ENCODE measurements at regions of chr1 and their contacts with region 1.

Region 1: DNA sequence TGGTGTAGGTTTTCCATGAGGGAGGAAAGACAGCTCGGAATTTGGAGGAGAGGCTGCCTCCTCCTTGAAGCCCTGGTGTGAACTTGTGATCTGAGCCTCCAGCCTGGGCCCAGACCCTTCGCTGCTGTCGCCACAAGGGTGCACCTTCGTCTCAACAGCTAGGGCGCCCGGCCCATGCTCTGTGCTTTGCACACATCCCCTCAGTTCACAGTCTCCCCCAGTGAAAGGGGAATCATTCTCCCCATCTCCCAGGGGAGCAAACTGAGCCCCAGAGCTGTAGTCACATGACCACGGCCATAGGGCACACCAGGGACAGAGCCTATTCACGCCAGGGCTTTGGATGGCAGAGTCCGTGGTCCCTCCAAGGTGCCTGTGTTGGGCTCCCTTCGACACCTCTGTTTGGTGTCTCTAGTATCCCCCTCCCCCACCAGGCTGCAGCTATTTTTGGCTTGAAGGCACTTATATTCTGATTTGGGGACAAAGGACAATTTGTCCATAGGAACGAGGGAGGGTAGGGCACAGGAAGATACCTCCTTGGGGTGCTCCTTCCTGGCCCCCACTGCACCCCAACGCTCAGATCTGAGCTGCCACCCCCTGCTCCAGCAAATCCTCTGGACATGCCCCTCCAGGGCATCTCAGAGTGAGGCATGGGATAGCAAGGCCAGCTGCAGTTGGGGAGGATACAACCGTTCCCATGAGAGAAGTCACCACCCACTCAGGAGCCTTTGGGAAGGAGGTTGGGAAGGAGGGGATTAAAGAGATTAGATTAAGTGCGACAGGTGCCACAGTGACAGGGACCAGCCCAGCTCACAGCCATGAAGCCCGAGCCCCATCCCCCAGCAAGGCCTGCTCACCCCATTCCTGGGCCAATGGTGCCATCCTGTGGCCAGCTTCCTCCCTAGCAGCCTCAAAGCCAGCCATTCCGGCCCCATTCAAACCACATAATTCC is 15.7 kb downstream of the MATN1 start:
- DNase-seq: peak; percentile 65
- H3K4me3 ChIP-seq: no peak overlapping the region
- H3K27ac ChIP-seq: no peak overlapping the region
- H3K4me1 ChIP-seq: no peaks in the 10 kb centered on the region
- CTCF ChIP-seq: peak; percentile 93

Region 2: DNA sequence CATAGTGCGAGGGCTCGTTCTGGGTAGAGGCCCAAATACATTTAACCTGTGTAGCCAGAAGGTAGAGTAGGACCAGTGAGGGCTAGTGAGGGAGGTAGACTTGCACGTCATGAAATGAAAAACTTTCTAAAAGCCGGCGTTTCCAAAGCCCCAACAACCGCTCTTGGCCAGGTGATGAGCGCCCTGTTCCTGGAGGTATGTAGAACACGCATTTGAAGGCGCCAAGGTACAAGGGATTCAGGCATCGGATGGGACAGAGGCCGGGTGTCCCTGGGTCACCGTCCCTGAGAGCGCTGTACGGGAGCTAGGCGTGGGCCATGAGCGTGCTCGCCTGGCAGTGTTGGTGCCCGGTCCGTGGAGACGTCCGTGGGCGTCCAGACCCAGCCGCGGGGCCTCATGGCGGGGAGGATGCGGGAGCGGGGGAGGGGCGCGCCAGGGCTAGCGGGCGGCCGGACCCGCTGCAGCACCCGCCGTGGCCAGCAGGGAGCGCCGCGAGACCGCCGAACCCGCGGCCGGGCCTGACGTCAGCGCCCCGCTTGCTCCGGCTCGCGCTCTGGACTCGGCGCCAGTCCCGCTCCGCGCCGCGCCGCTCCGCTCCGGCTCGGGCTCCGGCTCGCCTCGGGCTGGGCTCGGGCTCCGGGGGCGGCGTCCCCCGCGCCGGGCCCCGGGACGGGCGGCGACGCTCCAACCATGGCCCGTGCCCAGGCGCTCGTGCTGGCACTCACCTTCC is 1471.6 kb before region 1 on chr1 and contains the start of gene PTPRU:
- CTCF ChIA-PET with region 1: no interaction called
- POLR2A ChIA-PET with region 1: no interaction called
- intact Hi-C with region 1: loop called (anchors 5 kb)
- DNase-seq: peak; percentile 73
- H3K4me3 ChIP-seq: peak within 1 kb of the TSS; percentile 50
- H3K27ac ChIP-seq: no peak within 1 kb of the TSS
- H3K4me1 ChIP-seq: peaks cover 18% of the 10 kb centered on the region
- CTCF ChIP-seq: peak; percentile 71
- total RNA-seq, gene PTPRU: 2.5 and 7.3 TPM in 2 replicates

Region 3: GRCh38 chr1:29379443-29380073 is 1328.1 kb before region 1 on chr1:
- CTCF ChIA-PET with region 1: no interaction called
- POLR2A ChIA-PET with region 1: no interaction called
- intact Hi-C with region 1: loop called (anchors 10 kb)
- DNase-seq: peak; percentile 44
- H3K4me3 ChIP-seq: no peak overlapping the region
- H3K27ac ChIP-seq: no peak overlapping the region
- H3K4me1 ChIP-seq: no peaks in the 10 kb centered on the region
- CTCF ChIP-seq: peak; percentile 97

Region 4: GRCh38 chr1:29793101-29793546 is 914.6 kb before region 1 on chr1:
- CTCF ChIA-PET with region 1: no interaction called
- POLR2A ChIA-PET with region 1: no interaction called
- intact Hi-C with region 1: loop called (anchors 5 kb)
- DNase-seq: peak; percentile 80
- H3K4me3 ChIP-seq: no peak overlapping the region
- H3K27ac ChIP-seq: no peak overlapping the region
- H3K4me1 ChIP-seq: peaks cover 5% of the 10 kb centered on the region
- CTCF ChIP-seq: peak; percentile 88

Region 5: GRCh38 chr1:30407865-30408580 is 299.7 kb before region 1 on chr1:
- CTCF ChIA-PET with region 1: no interaction called
- POLR2A ChIA-PET with region 1: no interaction called
- intact Hi-C with region 1: loop called (anchors 5 kb)
- DNase-seq: no peak
- H3K4me3 ChIP-seq: no peak overlapping the region
- H3K27ac ChIP-seq: no peak overlapping the region
- H3K4me1 ChIP-seq: no peaks in the 10 kb centered on the region
- CTCF ChIP-seq: no peak

Measured in OCI-LY7 (cell line).